ENCODE measurements at regions of chr1 and their contacts with region 1.

Region 1: GRCh38 chr1:154404984-154405761 is at the start of gene IL6R:
- H3K4me3 Mint-ChIP-seq: peak within 1 kb of the TSS; percentile 97
- H3K27ac Mint-ChIP-seq: peak within 1 kb of the TSS; percentile 97
- H3K4me1 Mint-ChIP-seq: peaks cover 79% of the 10 kb centered on the region
- H3K27me3 Mint-ChIP-seq: no peaks in the 10 kb centered on the region

Region 2: GRCh38 chr1:154352581-154353459 is 52.4 kb before region 1 on chr1:
- intact Hi-C with region 1: loop called (anchors 5 kb)
- H3K4me3 Mint-ChIP-seq: peak overlapping the region; percentile 76
- H3K27ac Mint-ChIP-seq: peak overlapping the region; percentile 74
- H3K4me1 Mint-ChIP-seq: peaks cover 48% of the 10 kb centered on the region
- H3K27me3 Mint-ChIP-seq: peaks cover 26% of the 10 kb centered on the region

Region 3: DNA sequence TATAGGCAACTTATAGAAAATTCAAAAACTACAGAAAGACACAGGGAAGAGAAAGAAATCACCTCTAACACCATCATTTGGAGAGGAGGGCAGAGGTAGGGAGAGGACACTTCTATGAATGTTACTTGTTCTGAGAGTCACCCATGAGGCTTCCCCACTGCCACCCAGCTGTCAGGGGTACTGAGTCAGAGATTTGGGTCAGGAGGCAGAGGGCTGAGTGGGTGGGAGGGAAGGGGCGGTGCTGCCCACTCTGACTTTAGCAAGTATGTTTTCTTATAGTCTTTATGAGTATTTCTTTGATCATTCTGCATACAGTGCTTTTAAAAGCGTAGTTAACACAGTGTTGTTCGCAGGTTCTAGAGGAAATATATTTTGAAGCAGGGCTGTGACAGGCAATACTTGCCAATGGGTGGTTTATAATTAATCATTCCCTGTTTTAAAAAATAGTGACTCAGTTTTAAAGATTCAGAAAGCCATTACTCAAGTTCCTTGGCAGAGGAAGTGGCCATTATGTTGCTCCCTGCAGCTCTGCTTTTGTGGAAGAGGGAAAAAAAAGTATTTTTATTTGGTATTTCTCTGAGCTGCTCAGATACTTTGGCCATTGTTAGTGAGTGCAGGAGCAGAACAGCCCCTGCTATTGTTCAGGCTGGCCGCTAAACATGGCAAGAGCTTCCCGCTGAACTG is 18.3 kb after region 1 on chr1:
- intact Hi-C with region 1: loop called (anchors 2 kb)
- H3K4me3 Mint-ChIP-seq: peak overlapping the region; percentile 42
- H3K27ac Mint-ChIP-seq: peak overlapping the region; percentile 86
- H3K4me1 Mint-ChIP-seq: peaks cover 95% of the 10 kb centered on the region
- H3K27me3 Mint-ChIP-seq: no peaks in the 10 kb centered on the region

Region 4: DNA sequence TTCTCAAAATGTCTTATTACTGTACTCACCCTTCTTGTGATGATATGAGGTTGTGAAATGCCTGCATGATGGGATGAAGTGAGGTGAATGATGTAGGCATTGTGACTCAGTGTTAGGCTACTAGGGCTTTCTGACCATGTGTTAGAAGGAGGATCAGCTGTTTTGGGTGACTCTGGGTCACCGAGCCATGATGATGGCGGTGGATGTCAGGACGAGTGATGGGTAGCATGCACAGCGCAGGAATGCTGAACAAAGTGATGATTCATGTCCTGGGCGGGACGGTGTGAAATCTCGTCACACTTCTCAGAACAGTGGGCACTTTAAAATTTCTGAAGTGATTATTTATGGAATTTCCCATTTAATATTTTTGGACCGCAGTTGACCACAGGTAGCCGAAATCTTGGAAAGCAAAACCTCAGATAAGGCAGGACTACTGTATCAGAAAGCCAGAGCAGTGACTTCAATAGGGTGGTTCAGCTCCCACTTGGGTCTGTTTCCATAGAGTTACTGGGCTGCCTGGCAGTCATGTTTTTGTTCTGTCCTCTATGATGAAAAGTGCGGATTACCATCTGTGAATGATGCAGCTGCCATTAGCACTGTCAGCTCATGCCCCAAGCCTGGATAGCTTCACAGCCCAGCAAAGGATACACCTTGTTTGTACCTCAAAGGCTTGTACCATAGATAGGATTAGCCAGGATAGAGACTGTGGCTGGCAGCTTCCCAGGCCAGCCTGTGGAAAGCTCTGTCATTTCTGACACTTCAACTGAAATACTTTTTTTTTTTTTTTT is 26.6 kb after region 1 on chr1:
- intact Hi-C with region 1: loop called (anchors 2 kb)
- H3K4me3 Mint-ChIP-seq: no peak overlapping the region
- H3K27ac Mint-ChIP-seq: peak overlapping the region; percentile 86
- H3K4me1 Mint-ChIP-seq: peaks cover 81% of the 10 kb centered on the region
- H3K27me3 Mint-ChIP-seq: no peaks in the 10 kb centered on the region

Region 5: DNA sequence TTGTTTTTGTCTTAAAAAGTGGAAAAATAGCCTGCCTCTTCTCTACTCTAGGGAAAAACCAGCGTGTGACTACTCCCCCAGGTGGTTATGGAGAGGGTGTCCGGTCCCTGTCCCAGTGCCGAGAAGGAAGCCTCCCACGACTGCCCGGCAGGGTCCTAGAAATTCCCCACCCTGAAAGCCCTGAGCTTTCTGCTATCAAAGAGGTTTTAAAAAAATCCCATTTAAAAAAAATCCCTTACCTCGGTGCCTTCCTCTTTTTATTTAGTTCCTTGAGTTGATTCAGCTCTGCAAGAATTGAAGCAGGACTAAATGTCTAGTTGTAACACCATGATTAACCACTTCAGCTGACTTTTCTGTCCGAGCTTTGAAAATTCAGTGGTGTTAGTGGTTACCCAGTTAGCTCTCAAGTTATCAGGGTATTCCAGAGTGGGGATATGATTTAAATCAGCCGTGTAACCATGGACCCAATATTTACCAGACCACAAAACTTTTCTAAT is 61.8 kb after region 1 on chr1:
- intact Hi-C with region 1: loop called (anchors 2 kb)
- H3K4me3 Mint-ChIP-seq: no peak overlapping the region
- H3K27ac Mint-ChIP-seq: peak overlapping the region; percentile 95
- H3K4me1 Mint-ChIP-seq: peaks cover 66% of the 10 kb centered on the region
- H3K27me3 Mint-ChIP-seq: no peaks in the 10 kb centered on the region

Region 6: GRCh38 chr1:154546264-154547063 is 141.3 kb after region 1 on chr1:
- intact Hi-C with region 1: loop called (anchors 5 kb)
- H3K4me3 Mint-ChIP-seq: no peak overlapping the region
- H3K27ac Mint-ChIP-seq: no peak overlapping the region
- H3K4me1 Mint-ChIP-seq: peaks cover 51% of the 10 kb centered on the region
- H3K27me3 Mint-ChIP-seq: peaks cover 9% of the 10 kb centered on the region